ENCODE measurements at regions of chr5 and their contacts with region 1.

Region 1: GRCh38 chr5:32690153-32690552 is 21.0 kb upstream of the NPR3 start:
- DNase-seq: no peak
- ATAC-seq: no peak
- H3K4me3 ChIP-seq: no peak overlapping the region
- H3K4me3 Mint-ChIP-seq: no peak overlapping the region
- H3K27ac ChIP-seq: no peak overlapping the region
- H3K27ac Mint-ChIP-seq: no peak overlapping the region
- H3K4me1 ChIP-seq: no peaks in the 10 kb centered on the region
- H3K4me1 Mint-ChIP-seq: no peaks in the 10 kb centered on the region
- H3K27me3 ChIP-seq: no peaks in the 10 kb centered on the region
- H3K27me3 Mint-ChIP-seq: peaks cover 0 to 27% (median 12%) of the 10 kb centered on the region in 5 donors

Region 2: GRCh38 chr5:33423018-33423630 is 733.0 kb after region 1 on chr5:
- CTCF ChIA-PET with region 1: no interaction called
- POLR2A ChIA-PET with region 1: no interaction called
- intact Hi-C with region 1: loop called in 1 of 2 experiments (anchors 5 kb)
- DNase-seq: no peak
- ATAC-seq: no peak
- H3K4me3 ChIP-seq: no peak overlapping the region
- H3K4me3 Mint-ChIP-seq: no peak overlapping the region
- H3K27ac ChIP-seq: no peak overlapping the region
- H3K27ac Mint-ChIP-seq: no peak overlapping the region
- H3K4me1 ChIP-seq: no peaks in the 10 kb centered on the region
- H3K4me1 Mint-ChIP-seq: peaks cover 0 to 2% (median 0%) of the 10 kb centered on the region in 7 donors
- H3K27me3 ChIP-seq: no peaks in the 10 kb centered on the region
- H3K27me3 Mint-ChIP-seq: peaks cover 10 to 14% (median 12%) of the 10 kb centered on the region in 5 donors